Right lobe of liver (tissue), 6 donors: ENCODE measurements at regions of chr6 and their contacts with region 1.

Region 1: GRCh38 chr6:142167486-142167885 is 20.4 kb downstream of the VTA1 start:
- DNase-seq: no peak
- ATAC-seq: no peak
- H3K4me3 ChIP-seq: no peak overlapping the region
- H3K27ac ChIP-seq: no peak overlapping the region
- H3K4me1 ChIP-seq: peaks cover 0 to 26% (median 6%) of the 10 kb centered on the region in 4 donors
- H3K27me3 ChIP-seq: no peaks in the 10 kb centered on the region
- CTCF ChIP-seq: no peak
- POLR2A ChIP-seq: no peak

Region 2: DNA sequence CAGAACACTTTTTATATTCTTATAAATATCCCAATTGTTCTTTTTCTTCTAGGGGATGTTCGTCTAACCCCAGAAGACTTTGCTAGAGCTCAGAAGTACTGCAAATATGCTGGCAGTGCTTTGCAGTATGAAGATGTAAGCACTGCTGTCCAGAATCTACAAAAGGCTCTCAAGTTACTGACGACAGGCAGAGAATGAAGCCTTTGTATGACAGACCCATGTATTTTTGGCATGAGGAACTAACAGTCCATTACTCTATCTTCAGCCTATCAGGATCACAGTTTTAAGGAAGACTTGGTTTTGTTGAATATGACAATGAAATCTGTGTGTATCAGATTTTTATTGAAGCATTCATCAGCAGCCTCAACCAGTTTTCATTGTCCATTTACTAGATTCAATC is 51.0 kb after region 1 on chr6:
- intact Hi-C with region 1: loop called in 1 of 2 experiments (anchors 10 kb)
- DNase-seq: no peak
- ATAC-seq: no peak
- H3K4me3 ChIP-seq: no peak overlapping the region
- H3K27ac ChIP-seq: no peak overlapping the region
- H3K4me1 ChIP-seq: no peaks in the 10 kb centered on the region
- H3K27me3 ChIP-seq: no peaks in the 10 kb centered on the region
- CTCF ChIP-seq: no peak
- POLR2A ChIP-seq: no peak